Sciatic nerve (tissue), 2 donors: ENCODE measurements at regions of chr7 and their contacts with region 1.

Region 1: GRCh38 chr7:45157653-45158401 is at the start of gene RAMP3:
- DNase-seq: no peak
- ATAC-seq: no peak
- total RNA-seq, gene RAMP3: 59.6 TPM

Region 2: DNA sequence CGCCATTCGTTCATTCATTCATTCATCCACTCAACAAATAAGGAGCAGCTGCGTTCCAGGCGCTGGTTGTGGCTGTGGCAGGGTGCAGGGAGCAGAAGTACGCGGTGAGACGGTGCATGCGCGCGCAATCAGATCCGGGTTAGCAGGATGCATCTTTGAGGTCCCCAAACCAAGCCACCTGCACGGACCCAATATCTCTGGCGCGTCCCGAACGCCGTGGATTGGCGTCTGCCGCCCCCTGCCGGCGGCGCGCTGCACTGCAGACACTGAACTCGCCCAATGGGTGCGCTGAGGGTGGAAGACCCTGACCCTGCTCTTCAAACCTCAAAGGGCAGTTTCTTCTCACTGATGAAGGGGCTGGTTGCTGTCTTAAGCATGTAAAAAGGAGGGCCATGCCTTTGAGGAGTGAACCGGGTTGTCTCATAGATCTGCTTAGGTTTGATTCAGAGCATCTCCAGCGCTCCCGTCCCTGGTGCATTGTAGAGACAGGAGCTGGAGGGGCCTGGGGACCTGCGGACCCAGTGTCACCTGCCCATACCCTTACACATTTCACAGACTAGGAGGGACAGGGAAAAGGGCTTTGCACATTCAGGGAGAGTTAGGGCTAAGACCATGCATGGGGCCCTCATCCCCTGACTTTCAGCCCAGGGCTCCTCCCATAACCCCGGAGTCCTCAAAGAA is 102.3 kb after region 1 on chr7:
- intact Hi-C with region 1: loop called (anchors 1 kb)
- DNase-seq: peak; percentile 78
- ATAC-seq: peak; percentile 89